Tibial artery (tissue), 4 donors: ENCODE measurements at regions of chr6 and their contacts with region 1.

Region 1: GRCh38 chr6:25179051-25179778 is 100.0 kb upstream of the CARMIL1 start:
- DNase-seq: no peak
- H3K4me3 ChIP-seq: no peak overlapping the region
- H3K27ac ChIP-seq: peak overlapping the region; percentile 65 to 67
- H3K4me1 ChIP-seq: peaks cover 0 to 51% (median 23%) of the 10 kb centered on the region in 4 donors
- H3K27me3 ChIP-seq: no peaks in the 10 kb centered on the region
- CTCF ChIP-seq: no peak

Region 2: DNA sequence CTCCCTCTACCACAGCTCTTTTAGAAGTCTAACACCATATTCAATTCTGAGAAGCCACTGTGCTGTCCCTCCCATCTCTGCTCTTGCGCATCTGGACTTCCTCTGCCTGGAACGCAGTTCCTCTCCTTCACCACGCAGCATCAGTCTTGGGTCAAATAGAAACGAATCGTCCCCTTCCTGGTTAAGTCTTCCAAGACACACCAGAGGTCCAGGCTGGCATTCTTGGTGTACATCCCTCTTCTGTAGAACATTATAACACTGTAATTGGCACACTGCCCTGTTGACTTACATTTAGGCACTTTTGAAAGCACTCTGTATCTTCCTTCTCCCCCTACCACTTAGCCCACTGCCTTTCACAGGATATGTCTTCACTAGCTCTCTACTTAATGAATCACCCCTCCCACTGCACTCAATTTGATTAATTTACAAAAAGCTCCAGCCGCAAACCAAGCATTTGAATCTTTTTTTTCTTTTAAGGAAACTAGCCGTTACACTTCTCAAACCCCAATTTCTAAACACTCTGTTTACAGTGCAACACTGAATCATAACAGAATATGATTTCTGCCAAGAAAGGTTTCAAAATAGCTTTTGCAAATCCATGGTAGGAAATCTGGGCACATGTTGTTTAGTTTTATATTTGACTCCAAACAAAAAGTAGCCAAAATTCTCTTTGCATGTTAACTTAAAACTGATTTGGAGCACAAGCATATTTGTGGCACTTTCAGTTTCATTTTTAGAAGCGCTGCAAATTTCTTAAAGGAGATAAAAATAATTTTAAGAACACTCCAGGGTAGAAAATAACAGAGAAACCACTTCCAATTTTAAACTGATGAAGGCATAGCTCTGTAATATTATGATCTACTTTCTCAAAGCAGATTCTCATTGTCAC is 40.7 kb before region 1 on chr6:
- intact Hi-C with region 1: loop called (anchors 5 kb)
- DNase-seq: peak; percentile 75 to 80
- H3K4me3 ChIP-seq: peak overlapping the region; percentile 53
- H3K27ac ChIP-seq: peak overlapping the region; percentile 86
- H3K4me1 ChIP-seq: peaks cover 0 to 60% (median 14%) of the 10 kb centered on the region in 4 donors
- H3K27me3 ChIP-seq: no peaks in the 10 kb centered on the region
- CTCF ChIP-seq: peak; percentile 8 to 22

Region 3: GRCh38 chr6:25150031-25150430 is 29.2 kb before region 1 on chr6:
- intact Hi-C with region 1: no loop called
- DNase-seq: no peak
- H3K4me3 ChIP-seq: no peak overlapping the region
- H3K27ac ChIP-seq: peak overlapping the region; percentile 28 to 31
- H3K4me1 ChIP-seq: peaks cover 0 to 10% (median 0%) of the 10 kb centered on the region in 4 donors
- H3K27me3 ChIP-seq: no peaks in the 10 kb centered on the region
- CTCF ChIP-seq: no peak